A549 (cell line): ENCODE measurements at regions of chr14 and their contacts with region 1.

Region 1: DNA sequence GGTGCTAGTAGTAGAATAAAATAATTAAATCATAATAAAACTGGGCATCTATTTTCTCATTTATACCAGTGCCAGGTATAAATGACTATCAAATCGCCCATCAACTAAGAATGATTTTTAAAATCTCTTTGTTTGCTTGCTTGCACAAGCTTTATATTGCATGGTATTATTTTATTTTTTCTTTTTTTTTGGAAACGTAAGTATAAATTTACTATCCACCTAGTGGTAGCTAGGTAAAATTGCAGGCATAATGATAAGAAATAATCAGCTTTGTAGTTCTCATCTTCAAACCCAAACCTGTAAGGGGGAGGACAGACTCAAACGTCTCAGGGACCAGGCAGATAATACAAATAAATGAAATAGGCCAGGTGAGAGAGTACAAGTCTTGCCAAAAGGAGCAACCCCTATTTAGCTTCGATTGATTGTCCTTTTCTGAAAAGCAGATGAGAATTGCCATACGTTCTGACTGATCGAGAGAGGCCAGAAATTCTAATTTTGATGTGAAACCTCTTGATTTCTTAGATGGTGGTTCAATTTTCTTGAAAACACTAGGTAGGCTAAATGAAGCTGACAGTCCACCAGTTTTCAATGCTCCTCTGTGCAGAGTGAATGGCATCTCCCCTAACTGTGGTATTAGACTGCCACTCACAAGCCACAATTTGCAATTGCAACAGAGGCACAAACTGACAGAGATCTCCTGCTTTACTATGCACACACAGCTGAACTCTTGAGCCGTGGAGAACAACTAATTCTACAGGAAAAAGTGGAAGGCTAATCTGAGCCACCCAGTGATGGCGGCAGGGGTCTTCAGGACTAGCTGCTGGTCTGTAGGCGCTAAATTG is 189.3 kb downstream of the DACT1 start:
- DNase-seq: no peak
- ATAC-seq: no peak
- H3K4me3 ChIP-seq: no peak overlapping the region
- H3K27ac ChIP-seq: no peak overlapping the region
- H3K4me1 ChIP-seq: peaks cover 7% of the 10 kb centered on the region; the same call in 1 of the 3 replicates
- CTCF ChIP-seq: peak; percentile 28; the same call in 1 of the 3 replicates
- EP300 ChIP-seq: no peak
- POLR2A ChIP-seq: no peak
- RAD21 ChIP-seq: peak; percentile 20 to 49; a peak in 3 of 5 replicates

Region 2: DNA sequence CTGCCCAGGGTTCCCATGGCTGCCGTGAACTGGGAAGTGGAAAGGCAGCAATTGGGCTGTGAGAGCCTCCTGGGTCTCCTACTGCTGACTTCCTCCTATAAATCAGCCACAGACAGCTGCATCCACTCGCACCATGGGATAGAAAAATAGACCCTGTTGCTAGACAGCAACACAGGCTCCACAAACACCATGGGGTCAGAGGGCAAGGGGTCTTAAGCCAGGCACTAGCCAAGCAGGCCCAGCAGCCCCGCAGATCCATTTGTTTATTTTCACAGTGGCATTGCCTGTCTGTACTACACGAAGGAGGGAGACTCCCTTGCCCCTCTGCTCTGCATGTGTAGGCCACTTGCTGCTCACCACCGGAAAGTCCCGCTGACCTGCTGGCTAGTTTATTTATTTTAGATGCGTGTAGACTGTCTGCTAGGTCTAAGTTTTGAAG is 49.5 kb before region 1 on chr14:
- CTCF ChIA-PET with region 1: no interaction called
- POLR2A ChIA-PET with region 1: no interaction called
- DNase-seq: no peak
- ATAC-seq: no peak
- H3K4me3 ChIP-seq: no peak overlapping the region
- H3K27ac ChIP-seq: no peak overlapping the region
- H3K4me1 ChIP-seq: no peaks in the 10 kb centered on the region
- CTCF ChIP-seq: no peak
- EP300 ChIP-seq: no peak
- POLR2A ChIP-seq: no peak
- RAD21 ChIP-seq: no peak

Region 3: GRCh38 chr14:58844544-58844943 is 17.5 kb after region 1 on chr14:
- CTCF ChIA-PET with region 1: interaction called, 26 read pairs
- POLR2A ChIA-PET with region 1: no interaction called
- DNase-seq: no peak
- ATAC-seq: no peak
- H3K4me3 ChIP-seq: no peak overlapping the region
- H3K27ac ChIP-seq: no peak overlapping the region
- H3K4me1 ChIP-seq: no peaks in the 10 kb centered on the region
- CTCF ChIP-seq: no peak
- EP300 ChIP-seq: no peak
- POLR2A ChIP-seq: no peak
- RAD21 ChIP-seq: no peak